ENCODE measurements at regions of chrX and their contacts with region 1.

Region 1: GRCh38 chrX:1537035-1537715 is at the start of gene P2RY8:
- DNase-seq: peak; percentile 56 to 88 (median 80)
- ATAC-seq: peak; percentile 91
- H3K4me3 ChIP-seq: peak within 1 kb of the TSS; percentile 81
- H3K4me3 Mint-ChIP-seq: peak within 1 kb of the TSS; percentile 89 to 99 (median 98)
- H3K27ac ChIP-seq: peak within 1 kb of the TSS; percentile 88
- H3K27ac Mint-ChIP-seq: peak within 1 kb of the TSS; percentile 98 to 100 (median 99)
- H3K4me1 ChIP-seq: peaks cover 3 to 6% of the 10 kb centered on the region in 2 donors
- H3K4me1 Mint-ChIP-seq: peaks cover 11 to 29% (median 20%) of the 10 kb centered on the region in 7 donors
- H3K27me3 ChIP-seq: no peaks in the 10 kb centered on the region
- H3K27me3 Mint-ChIP-seq: no peaks in the 10 kb centered on the region
- total RNA-seq, gene P2RY8: 109 to 158 (median 122) TPM

Region 2: DNA sequence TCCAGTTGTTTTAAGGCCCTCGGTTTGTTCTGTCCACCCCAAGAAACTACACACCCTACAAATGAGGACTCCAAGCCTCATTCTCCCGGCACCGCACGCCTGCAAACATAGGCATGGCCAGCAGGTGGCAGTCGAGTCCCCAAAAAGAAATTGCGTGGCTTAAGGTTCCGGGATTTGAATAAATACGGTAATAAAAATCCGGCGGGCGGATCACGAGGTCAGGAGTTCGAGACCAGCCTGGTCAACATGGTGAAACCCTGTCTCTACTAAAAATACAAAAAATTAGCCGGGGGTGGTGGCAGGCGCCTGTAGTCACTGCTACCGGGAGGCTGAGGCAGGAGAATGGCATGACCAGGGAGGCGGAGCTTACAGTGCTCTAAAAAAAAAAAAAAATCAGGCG is 290.4 kb before region 1 on chrX:
- CTCF ChIA-PET with region 1: no interaction called
- POLR2A ChIA-PET with region 1: no interaction called
- intact Hi-C with region 1: loop called (anchors 2 to 5 kb)
- DNase-seq: peak; percentile 55 to 88 (median 77)
- ATAC-seq: peak; percentile 81
- H3K4me3 ChIP-seq: no peak overlapping the region
- H3K4me3 Mint-ChIP-seq: peak overlapping the region in 9 of 10 donors; percentile 4 to 72 (median 63)
- H3K27ac ChIP-seq: no peak overlapping the region
- H3K27ac Mint-ChIP-seq: peak overlapping the region; percentile 44 to 84 (median 80)
- H3K4me1 ChIP-seq: peaks cover 6 to 18% of the 10 kb centered on the region in 2 donors
- H3K4me1 Mint-ChIP-seq: peaks cover 6 to 45% (median 38%) of the 10 kb centered on the region in 7 donors
- H3K27me3 ChIP-seq: no peaks in the 10 kb centered on the region
- H3K27me3 Mint-ChIP-seq: peaks cover 0 to 2% (median 0%) of the 10 kb centered on the region in 5 donors

Region 3: DNA sequence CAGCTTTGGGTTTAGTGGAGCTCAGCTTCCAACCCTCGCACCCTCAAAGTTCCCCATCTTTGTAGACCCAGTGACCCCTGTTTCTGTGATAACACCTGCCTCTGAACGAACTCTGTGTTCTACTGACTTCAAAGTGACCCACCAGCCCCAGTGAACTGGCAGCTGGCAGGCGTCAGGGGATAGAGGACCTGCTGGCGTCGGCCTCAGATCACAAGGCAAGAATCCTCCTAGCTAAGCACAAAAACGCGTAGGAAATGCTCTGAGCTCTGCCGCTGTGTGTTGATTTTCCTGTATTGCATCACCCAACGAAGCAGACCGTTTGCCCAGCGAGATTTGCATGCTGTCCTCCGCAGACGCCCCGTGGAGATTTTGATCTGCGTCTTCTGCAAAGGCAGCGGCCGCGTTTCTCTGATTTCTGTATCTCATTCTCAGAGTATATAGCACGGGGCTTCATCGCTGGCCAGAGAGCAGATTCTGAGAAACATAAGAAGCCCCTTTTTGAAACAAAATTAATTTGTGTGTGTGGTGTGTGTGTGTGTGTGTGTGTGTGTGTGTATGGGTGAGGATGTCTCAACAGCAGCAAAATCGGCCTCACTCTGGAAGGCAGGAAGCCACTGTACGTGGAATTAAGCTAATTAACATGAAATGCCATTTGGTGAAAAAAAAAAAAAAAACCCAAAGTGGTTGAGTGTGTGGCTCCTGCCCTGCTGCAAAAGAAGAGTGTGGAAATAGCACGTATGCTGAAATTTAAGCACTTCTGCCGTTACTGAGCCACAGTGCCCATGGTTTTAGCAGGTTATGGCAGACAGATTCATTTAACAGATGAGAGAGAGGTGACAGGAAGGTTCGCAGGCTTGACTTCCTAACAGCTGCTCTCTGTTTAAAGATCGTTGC is 55.3 kb before region 1 on chrX:
- CTCF ChIA-PET with region 1: no interaction called
- POLR2A ChIA-PET with region 1: no interaction called
- intact Hi-C with region 1: loop called (anchors 1 to 5 kb)
- DNase-seq: peak; percentile 40 to 86 (median 79)
- ATAC-seq: peak; percentile 88
- H3K4me3 ChIP-seq: peak overlapping the region; percentile 29
- H3K4me3 Mint-ChIP-seq: peak overlapping the region; percentile 76 to 92 (median 83)
- H3K27ac ChIP-seq: peak overlapping the region; percentile 76
- H3K27ac Mint-ChIP-seq: peak overlapping the region; percentile 90 to 99 (median 97)
- H3K4me1 ChIP-seq: peaks cover 28 to 56% of the 10 kb centered on the region in 2 donors
- H3K4me1 Mint-ChIP-seq: peaks cover 50 to 74% (median 69%) of the 10 kb centered on the region in 7 donors
- H3K27me3 ChIP-seq: no peaks in the 10 kb centered on the region
- H3K27me3 Mint-ChIP-seq: no peaks in the 10 kb centered on the region

Region 4: GRCh38 chrX:1521459-1521956 is 15.7 kb before region 1 on chrX:
- CTCF ChIA-PET with region 1: no interaction called
- POLR2A ChIA-PET with region 1: no interaction called
- intact Hi-C with region 1: loop called (anchors 1 kb)
- DNase-seq: peak in 8 of 9 donors; percentile 46 to 81 (median 72)
- ATAC-seq: peak; percentile 90
- H3K4me3 ChIP-seq: peak overlapping the region; percentile 15
- H3K4me3 Mint-ChIP-seq: peak overlapping the region; percentile 77 to 91 (median 84)
- H3K27ac ChIP-seq: peak overlapping the region; percentile 20
- H3K27ac Mint-ChIP-seq: peak overlapping the region; percentile 84 to 97 (median 94)
- H3K4me1 ChIP-seq: peaks cover 32 to 40% of the 10 kb centered on the region in 2 donors
- H3K4me1 Mint-ChIP-seq: peaks cover 46 to 62% (median 56%) of the 10 kb centered on the region in 7 donors
- H3K27me3 ChIP-seq: no peaks in the 10 kb centered on the region
- H3K27me3 Mint-ChIP-seq: no peaks in the 10 kb centered on the region

Region 5: GRCh38 chrX:1580735-1581531 is 43.8 kb after region 1 on chrX:
- CTCF ChIA-PET with region 1: no interaction called
- POLR2A ChIA-PET with region 1: no interaction called
- intact Hi-C with region 1: loop called (anchors 1 kb)
- DNase-seq: peak; percentile 42 to 75 (median 67)
- ATAC-seq: peak; percentile 89
- H3K4me3 ChIP-seq: no peak overlapping the region
- H3K4me3 Mint-ChIP-seq: peak overlapping the region in 5 of 10 donors; percentile 16 to 60 (median 50)
- H3K27ac ChIP-seq: no peak overlapping the region
- H3K27ac Mint-ChIP-seq: peak overlapping the region in 7 of 9 donors; percentile 11 to 83 (median 57)
- H3K4me1 ChIP-seq: peaks cover 33 to 36% of the 10 kb centered on the region in 2 donors
- H3K4me1 Mint-ChIP-seq: peaks cover 17 to 36% (median 28%) of the 10 kb centered on the region in 7 donors
- H3K27me3 ChIP-seq: no peaks in the 10 kb centered on the region
- H3K27me3 Mint-ChIP-seq: no peaks in the 10 kb centered on the region

Region 6: DNA sequence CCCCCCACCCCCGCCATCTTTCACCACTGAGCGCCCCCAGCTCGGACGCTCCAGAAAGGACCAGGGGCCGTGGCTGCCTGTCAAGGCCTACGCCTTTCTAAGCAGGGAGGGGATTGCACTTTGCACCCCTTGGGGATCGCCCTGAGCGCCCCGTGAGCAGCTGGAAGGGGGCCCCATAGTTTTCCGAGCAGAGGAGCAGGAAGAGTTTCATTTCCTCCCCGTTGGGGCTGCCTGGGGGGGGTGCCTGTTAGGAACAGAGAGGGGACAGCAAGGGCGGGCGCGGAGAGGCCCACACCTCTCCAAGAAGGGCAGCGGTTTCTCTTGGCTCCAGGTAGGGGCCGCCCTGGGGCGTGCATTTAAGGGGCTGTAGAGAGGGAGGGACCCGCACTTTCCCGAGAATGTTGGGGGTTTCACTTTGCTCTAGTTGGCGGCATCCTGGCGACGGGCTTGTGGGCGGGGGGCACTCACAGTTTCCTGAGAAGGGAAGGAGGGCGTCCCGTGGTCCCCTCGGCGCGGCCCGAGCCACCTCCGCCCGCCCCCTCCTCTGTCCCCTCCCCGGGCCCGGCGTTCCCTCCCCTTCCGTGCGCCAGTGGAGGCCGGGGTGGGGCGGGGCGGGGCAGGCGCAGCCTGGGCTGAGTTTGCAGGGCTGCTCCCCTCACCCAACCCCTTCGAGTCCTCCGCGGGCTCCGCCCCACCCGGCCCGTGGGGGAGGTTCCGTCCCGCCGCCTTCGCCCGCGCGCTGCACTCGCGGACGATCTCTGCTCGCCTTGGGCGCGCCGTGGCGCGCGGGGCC is 1071.7 kb after region 1 on chrX:
- CTCF ChIA-PET with region 1: no interaction called
- POLR2A ChIA-PET with region 1: no interaction called
- intact Hi-C with region 1: loop called in 1 of 2 experiments (anchors 2 kb)
- DNase-seq: peak; percentile 69 to 89 (median 79)
- ATAC-seq: peak; percentile 99
- H3K4me3 ChIP-seq: peak overlapping the region; percentile 89
- H3K4me3 Mint-ChIP-seq: peak overlapping the region; percentile 90 to 96 (median 93)
- H3K27ac ChIP-seq: peak overlapping the region; percentile 71
- H3K27ac Mint-ChIP-seq: peak overlapping the region; percentile 51 to 93 (median 86)
- H3K4me1 ChIP-seq: peaks cover 9 to 17% of the 10 kb centered on the region in 2 donors
- H3K4me1 Mint-ChIP-seq: peaks cover 39 to 72% (median 56%) of the 10 kb centered on the region in 7 donors
- H3K27me3 ChIP-seq: no peaks in the 10 kb centered on the region
- H3K27me3 Mint-ChIP-seq: no peaks in the 10 kb centered on the region

Measured in naive thymus-derived CD4-positive, alpha-beta T cell (primary cell).